Activated CD8-positive, alpha-beta T cell treated with anti-CD3 and anti-CD28 coated beads for 36 hours (primary cell): ENCODE measurements at regions of chr6 and their contacts with region 1.

Region 1: GRCh38 chr6:44221291-44221960 is 2.0 kb upstream of the SLC29A1 start:
- DNase-seq: peak; percentile 87
- ATAC-seq: peak; percentile 69
- H3K4me3 Mint-ChIP-seq: no peak overlapping the region
- H3K27ac Mint-ChIP-seq: no peak overlapping the region
- H3K4me1 Mint-ChIP-seq: peaks cover 52% of the 10 kb centered on the region
- H3K27me3 Mint-ChIP-seq: peaks cover 6% of the 10 kb centered on the region
- CTCF ChIP-seq: peak; percentile 81

Region 2: DNA sequence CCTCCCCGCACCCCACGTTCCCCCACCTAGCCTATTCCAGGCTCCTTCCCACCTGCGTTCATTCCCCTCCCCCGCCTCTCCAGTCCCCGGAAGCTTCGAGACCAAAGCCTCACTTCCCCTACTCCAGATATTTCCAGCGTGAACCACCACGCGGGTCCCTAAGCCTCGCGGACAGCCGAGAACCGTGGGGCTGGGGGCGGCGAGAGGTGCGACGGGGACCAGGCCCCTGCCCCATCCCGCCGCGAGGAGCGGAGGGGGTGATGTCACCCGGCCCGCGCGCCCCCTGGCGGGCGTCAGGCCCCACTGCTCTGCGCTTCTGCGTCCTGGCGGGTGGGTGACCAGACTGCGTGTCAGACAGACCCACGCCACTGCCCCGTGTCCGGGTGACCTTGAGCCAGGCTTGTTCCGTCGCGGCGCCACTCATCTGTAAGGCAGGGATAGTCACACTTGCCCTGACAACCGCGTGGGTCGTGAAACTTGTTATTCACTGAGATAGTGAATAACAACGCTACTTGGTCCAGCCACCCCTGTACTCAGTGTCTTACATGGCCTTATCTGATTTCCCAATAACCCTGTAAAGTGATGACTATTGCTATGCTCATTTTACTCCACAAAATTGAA is 16.5 kb after region 1 on chr6:
- CTCF ChIA-PET with region 1: interaction called, 52 read pairs
- POLR2A ChIA-PET with region 1: interaction called, 131 read pairs
- intact Hi-C with region 1: no loop called
- DNase-seq: peak; percentile 80
- ATAC-seq: peak; percentile 88
- H3K4me3 Mint-ChIP-seq: peak overlapping the region; percentile 76
- H3K27ac Mint-ChIP-seq: peak overlapping the region; percentile 93
- H3K4me1 Mint-ChIP-seq: peaks cover 21% of the 10 kb centered on the region
- H3K27me3 Mint-ChIP-seq: no peaks in the 10 kb centered on the region
- CTCF ChIP-seq: peak; percentile 96

Region 3: GRCh38 chr6:44257025-44257752 is 35.8 kb after region 1 on chr6 and contains the start of gene SLC35B2:
- CTCF ChIA-PET with region 1: interaction called, 7 read pairs
- POLR2A ChIA-PET with region 1: interaction called, 24 read pairs
- intact Hi-C with region 1: no loop called
- DNase-seq: peak; percentile 72
- ATAC-seq: peak; percentile 68
- H3K4me3 Mint-ChIP-seq: peak within 1 kb of the TSS; percentile 85
- H3K27ac Mint-ChIP-seq: peak within 1 kb of the TSS; percentile 85
- H3K4me1 Mint-ChIP-seq: peaks cover 66% of the 10 kb centered on the region
- H3K27me3 Mint-ChIP-seq: no peaks in the 10 kb centered on the region
- CTCF ChIP-seq: peak; percentile 77
- total RNA-seq, gene SLC35B2: 15.4 to 16.7 TPM